ENCODE measurements at regions of chr20 and their contacts with region 1.

Region 1: GRCh38 chr20:44942264-44942973 is 17.8 kb downstream of the TOMM34 start:
- DNase-seq: no peak
- H3K4me3 Mint-ChIP-seq: no peak overlapping the region
- H3K27ac Mint-ChIP-seq: no peak overlapping the region
- H3K4me1 Mint-ChIP-seq: no peaks in the 10 kb centered on the region
- H3K27me3 Mint-ChIP-seq: no peaks in the 10 kb centered on the region
- CTCF ChIP-seq: no peak

Region 2: GRCh38 chr20:44566013-44566412 is 376.4 kb before region 1 on chr20:
- CTCF ChIA-PET with region 1: no interaction called
- POLR2A ChIA-PET with region 1: no interaction called
- intact Hi-C with region 1: no loop called
- DNase-seq: peak; percentile 17
- H3K4me3 Mint-ChIP-seq: no peak overlapping the region
- H3K27ac Mint-ChIP-seq: no peak overlapping the region
- H3K4me1 Mint-ChIP-seq: peaks cover 9% of the 10 kb centered on the region
- H3K27me3 Mint-ChIP-seq: no peaks in the 10 kb centered on the region
- CTCF ChIP-seq: no peak

Region 3: GRCh38 chr20:44829688-44830087 is 112.7 kb before region 1 on chr20:
- CTCF ChIA-PET with region 1: no interaction called
- POLR2A ChIA-PET with region 1: no interaction called
- intact Hi-C with region 1: no loop called
- DNase-seq: no peak
- H3K4me3 Mint-ChIP-seq: no peak overlapping the region
- H3K27ac Mint-ChIP-seq: no peak overlapping the region
- H3K4me1 Mint-ChIP-seq: no peaks in the 10 kb centered on the region
- H3K27me3 Mint-ChIP-seq: peaks cover 63% of the 10 kb centered on the region
- CTCF ChIP-seq: no peak

Region 4: GRCh38 chr20:44952736-44953135 is 10.3 kb after region 1 on chr20:
- CTCF ChIA-PET with region 1: interaction called, 4 read pairs
- POLR2A ChIA-PET with region 1: interaction called, 29 read pairs
- intact Hi-C with region 1: no loop called
- DNase-seq: no peak
- H3K4me3 Mint-ChIP-seq: no peak overlapping the region
- H3K27ac Mint-ChIP-seq: no peak overlapping the region
- H3K4me1 Mint-ChIP-seq: peaks cover 10% of the 10 kb centered on the region
- H3K27me3 Mint-ChIP-seq: no peaks in the 10 kb centered on the region
- CTCF ChIP-seq: no peak

Measured in MCF 10A (cell line).